Cardiac septum (tissue), 1 donor: ENCODE measurements at regions of chr18 and their contacts with region 1.

Region 1: DNA sequence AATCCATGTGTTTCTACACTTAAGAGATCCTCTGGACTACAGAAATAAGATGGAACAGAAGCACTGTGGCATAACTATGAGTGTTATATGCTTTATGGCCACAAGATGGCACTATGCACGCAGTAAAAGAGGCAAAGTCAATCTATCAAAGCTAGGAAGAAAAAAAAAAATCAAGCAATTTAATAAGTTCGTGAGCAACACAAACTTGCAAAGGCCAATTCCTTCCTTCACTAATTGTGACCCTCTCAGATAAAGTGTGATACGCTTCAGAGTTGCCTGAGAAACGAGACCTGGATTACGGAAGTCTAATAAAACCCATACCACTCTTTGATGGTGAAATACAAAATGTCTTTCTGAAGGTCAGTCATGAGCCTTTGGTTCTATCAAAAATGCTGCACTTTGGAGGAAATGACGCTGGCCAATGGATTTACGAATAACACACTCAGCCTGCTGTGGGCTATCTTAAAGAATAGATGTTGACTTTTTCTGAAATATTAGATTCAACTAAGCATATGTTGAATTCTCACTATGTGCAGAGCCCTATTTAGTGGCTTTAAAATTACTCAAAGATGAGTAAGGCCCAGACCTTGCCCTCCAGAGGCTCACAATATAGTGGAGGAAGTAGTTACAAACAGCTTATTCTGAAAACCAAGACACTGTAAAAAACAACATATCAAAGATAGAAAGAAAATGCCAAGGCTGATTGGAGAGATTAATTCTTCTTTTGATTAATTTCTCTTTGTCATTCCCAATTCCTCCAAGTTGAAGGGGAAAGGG is 35.5 kb upstream of the TTR start:
- DNase-seq: no peak

Region 2: DNA sequence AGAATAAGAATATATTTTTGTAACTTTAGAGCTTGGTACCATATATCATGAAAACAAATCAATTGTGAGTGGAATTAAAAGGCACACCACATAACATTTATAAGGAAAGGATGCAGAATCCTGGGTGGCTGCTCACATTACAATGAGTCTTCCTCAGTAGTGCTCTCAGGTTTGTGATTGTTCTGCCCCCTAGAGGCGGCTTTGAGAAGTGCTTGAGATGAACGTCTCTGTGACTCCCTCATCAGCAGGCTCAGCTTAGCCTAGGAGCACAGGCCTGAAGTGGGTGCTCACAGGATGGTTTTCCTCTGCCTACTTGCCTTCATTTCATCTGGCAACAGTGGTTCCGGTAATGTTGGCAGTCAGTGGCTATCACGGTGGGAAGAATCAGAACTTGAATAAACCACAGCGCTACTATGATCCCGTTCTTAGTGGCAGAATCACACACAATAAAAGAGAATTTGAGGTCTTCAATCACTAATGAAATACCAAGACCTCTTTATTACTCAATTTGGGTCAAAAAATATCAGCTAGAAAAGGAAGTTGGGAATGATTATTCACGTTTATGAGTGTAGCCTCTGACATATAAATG is 166.3 kb after region 1 on chr18:
- intact Hi-C with region 1: loop called (anchors 5 kb)
- DNase-seq: peak; percentile 79

Region 3: GRCh38 chr18:31819106-31819924 is 263.2 kb after region 1 on chr18:
- intact Hi-C with region 1: loop called (anchors 2 kb)
- DNase-seq: no peak

Region 4: DNA sequence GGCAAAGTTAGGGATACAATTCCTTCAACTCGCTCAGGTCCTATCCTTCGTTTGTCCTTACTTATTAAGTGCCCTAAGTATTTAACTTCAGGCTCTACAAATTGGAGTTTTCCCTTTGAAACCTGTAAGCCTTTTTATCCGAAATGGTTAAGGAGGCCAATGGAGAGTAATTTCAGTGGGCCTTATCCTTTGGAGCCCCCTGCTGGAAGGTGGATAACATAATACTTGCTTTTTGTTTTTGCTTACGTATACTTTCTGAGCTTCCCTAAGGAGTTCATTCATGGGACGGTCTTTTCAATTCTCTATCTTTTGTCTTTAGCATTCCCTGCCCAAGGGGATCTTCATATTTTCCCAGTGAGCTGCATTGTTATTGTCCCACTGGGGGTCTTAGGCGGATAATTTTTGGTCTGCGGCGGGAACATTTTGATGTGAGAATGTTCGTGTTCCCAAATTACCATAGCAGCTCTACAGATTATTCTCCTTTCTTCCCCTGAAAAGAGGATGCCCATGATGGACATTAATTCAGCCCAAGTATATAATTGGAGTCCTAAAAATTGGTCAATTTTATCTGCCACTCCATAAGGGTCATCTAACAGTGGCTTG is 421.2 kb after region 1 on chr18:
- intact Hi-C with region 1: loop called (anchors 5 kb)
- DNase-seq: no peak